Left cardiac atrium (tissue), 4 donors: ENCODE measurements at regions of chr9 and their contacts with region 1.

Region 1: DNA sequence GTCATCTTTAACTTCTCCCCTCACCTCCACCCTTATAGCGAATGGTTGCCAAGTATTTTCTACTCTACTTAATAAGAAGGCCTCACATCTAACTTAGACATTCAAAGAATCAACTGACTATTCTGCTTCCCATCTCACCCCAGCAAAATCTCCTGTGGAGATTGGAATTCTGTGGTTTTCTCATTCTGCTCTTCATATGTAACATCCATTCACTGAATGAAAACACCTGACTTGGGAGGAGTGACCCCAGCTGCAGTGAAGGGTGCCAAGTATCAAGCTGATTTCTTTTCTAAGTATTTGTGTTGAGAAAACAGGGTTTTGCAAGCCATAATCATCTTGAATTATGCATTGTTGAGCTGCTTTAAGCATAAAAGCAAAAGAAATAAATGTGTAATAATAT is 42.5 kb upstream of the TAF1L start:
- DNase-seq: no peak
- ATAC-seq: no peak

Region 2: DNA sequence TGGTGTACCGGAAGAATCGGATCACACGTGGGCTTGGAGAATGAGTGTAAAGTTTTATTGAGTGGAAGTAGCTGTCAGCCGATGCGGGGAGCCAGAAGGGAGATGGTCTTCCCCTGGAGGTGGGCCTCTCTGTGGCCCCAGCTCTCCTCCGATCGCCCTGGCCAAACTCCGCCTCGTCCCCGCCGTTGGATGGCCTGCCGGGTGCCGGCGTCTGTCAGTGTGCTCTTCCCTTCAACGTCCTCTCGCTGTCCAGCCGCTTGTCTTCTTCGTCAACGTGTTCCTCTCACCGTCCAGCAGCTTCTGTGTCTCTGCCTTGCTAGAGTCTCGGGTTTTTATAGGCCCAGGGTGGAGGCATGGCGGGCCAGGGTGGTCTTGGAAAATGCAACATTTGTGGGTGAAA is 77.8 kb after region 1 on chr9:
- intact Hi-C with region 1: loop called in 1 of 2 experiments (anchors 10 kb)
- DNase-seq: no peak
- ATAC-seq: no peak